Heart left ventricle (tissue), 16 donors: ENCODE measurements at regions of chr9 and their contacts with region 1.

Region 1: GRCh38 chr9:108033976-108034964 is 544.7 kb upstream of the KLF4 start:
- DNase-seq: no peak
- ATAC-seq: peak; percentile 64 to 90 (median 67)
- H3K4me3 ChIP-seq: no peak overlapping the region
- H3K27ac ChIP-seq: peak overlapping the region in 3 of 12 donors; percentile 8 to 14 (median 11)
- H3K4me1 ChIP-seq: peaks cover 0 to 3% (median 0%) of the 10 kb centered on the region in 12 donors
- H3K27me3 ChIP-seq: no peaks in the 10 kb centered on the region
- CTCF ChIP-seq: no peak
- POLR2A ChIP-seq: no peak

Region 2: DNA sequence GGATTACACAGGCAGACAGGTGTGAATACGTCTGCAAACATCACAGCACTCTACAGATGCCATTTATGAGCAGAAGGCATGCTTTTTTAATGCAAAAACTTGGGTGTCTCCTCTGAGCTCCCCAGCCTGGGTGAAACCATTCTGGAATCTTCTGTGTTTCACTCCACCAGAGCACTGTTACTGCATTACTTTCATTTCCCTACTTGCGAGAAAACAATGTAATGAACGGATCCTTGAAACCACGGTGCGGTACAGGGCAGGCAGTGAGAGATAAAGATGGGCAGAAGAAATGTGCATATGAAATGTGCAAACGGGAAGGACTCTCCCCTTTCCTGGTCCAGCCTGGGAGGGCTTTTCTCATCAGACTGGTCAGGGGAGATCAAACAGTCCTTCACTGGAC is 39.6 kb after region 1 on chr9:
- intact Hi-C with region 1: loop called in 1 of 10 experiments (anchors 1 kb)
- DNase-seq: no peak
- ATAC-seq: no peak
- H3K4me3 ChIP-seq: no peak overlapping the region
- H3K27ac ChIP-seq: no peak overlapping the region
- H3K4me1 ChIP-seq: peaks cover 0 to 5% (median 0%) of the 10 kb centered on the region in 12 donors
- H3K27me3 ChIP-seq: no peaks in the 10 kb centered on the region
- CTCF ChIP-seq: no peak
- POLR2A ChIP-seq: no peak